B cell (primary cell): ENCODE measurements at regions of chr11 and their contacts with region 1.

Region 1: GRCh38 chr11:65859200-65859811 is 927 bp upstream of the MUS81 start:
- DNase-seq: peak; percentile 97
- ATAC-seq: peak; percentile 62
- H3K4me3 ChIP-seq: peak overlapping the region; percentile 81 to 98 (median 95)
- H3K4me3 Mint-ChIP-seq: peak overlapping the region; percentile 92
- H3K27ac ChIP-seq: peak overlapping the region; percentile 77 to 89
- H3K27ac Mint-ChIP-seq: peak overlapping the region; percentile 98
- H3K4me1 ChIP-seq: peaks cover 27 to 54% of the 10 kb centered on the region in 2 donors
- H3K4me1 Mint-ChIP-seq: peaks cover 47% of the 10 kb centered on the region
- H3K27me3 ChIP-seq: no peaks in the 10 kb centered on the region
- H3K27me3 Mint-ChIP-seq: no peaks in the 10 kb centered on the region
- CTCF ChIP-seq: no peak

Region 2: DNA sequence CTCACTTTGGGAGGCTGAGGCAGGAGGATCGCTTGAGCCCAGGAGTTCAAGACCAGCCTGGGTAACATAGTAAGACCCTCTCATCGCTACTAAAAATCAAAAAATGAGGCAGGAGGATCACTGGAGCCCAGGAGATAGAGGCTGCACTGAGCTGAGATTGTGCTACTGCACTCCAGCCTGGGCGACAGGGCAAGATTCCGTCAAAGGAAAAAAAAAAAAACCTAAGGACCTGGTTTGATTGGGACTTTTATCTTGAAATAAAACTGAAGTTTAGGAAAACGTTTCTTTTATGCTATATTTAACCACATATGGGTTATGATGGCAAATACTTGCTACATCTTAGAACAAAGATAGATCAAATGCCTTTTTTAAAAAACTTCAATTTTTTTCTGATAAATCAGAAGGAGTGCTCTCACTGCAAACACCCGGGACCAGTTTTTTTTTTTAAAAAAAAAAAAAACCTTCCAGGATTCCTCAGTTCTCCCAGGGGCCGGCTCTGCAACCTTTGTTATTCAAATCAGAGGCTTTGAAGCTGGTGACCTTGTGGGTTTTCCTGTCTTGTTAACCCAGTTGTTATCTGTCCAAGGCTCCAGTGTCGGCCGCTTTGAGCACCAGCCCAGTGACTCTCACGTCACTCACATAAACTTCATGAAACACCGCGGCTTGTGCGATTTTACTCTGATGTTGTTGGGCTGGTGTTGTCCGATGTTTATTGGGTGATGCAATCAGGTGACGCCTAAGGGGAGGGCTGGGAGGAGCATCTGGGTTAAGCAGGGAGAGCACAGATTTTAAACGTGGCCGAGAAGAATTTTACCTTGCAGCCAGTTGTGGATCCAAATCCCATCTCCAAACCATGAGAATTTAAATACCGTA is 1293.0 kb before region 1 on chr11:
- CTCF ChIA-PET with region 1: no interaction called
- POLR2A ChIA-PET with region 1: no interaction called
- intact Hi-C with region 1: no loop called
- DNase-seq: no peak
- ATAC-seq: no peak
- H3K4me3 ChIP-seq: no peak overlapping the region
- H3K4me3 Mint-ChIP-seq: no peak overlapping the region
- H3K27ac ChIP-seq: no peak overlapping the region
- H3K27ac Mint-ChIP-seq: no peak overlapping the region
- H3K4me1 ChIP-seq: no peaks in the 10 kb centered on the region
- H3K4me1 Mint-ChIP-seq: no peaks in the 10 kb centered on the region
- H3K27me3 ChIP-seq: no peaks in the 10 kb centered on the region
- H3K27me3 Mint-ChIP-seq: no peaks in the 10 kb centered on the region
- CTCF ChIP-seq: no peak

Region 3: DNA sequence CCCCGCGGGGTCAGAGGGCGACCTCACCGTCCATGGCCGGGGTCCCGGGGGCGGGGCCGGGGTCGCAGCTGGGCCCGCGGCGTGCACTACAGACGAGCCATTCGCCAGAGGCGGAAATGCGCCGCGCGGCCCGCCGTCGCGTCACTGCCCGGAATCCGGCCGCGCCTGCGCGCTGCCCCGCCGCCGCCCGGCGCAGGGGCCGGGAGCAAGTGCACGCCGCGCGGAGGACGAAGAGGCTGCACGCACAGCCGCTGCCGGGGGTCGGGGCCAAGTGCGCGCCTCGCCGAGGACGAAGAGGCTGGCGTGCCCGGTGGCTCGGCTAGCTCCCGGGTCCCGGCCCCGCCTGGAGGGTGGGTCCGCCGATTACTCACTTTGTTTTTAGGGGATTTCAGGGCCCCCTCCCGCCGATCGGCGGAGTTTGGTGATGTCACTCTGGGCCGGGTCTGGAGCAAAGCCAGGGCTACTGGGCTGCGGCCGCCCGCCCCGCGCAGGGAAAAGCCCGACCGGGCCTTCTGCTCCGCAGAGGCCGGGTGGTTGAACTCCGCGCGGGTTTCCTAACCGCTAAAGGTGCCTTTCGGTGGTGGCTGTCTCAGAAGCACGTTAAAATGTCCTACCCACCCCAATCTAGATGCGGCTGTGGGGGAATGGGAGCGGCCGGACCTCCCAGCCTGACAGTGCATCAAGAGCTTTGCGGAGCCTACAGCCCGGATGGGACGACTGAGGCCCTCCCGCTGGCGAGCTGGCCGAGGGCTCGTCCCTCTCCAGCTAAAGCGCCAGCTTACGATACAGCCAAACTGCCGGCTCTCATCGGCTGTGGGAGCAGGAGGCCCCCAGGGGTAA is 196.3 kb before region 1 on chr11 and contains the start of gene RELA:
- CTCF ChIA-PET with region 1: interaction called, 3 read pairs
- POLR2A ChIA-PET with region 1: no interaction called
- intact Hi-C with region 1: loop called (anchors 2 kb)
- DNase-seq: peak; percentile 94
- ATAC-seq: peak; percentile 86
- H3K4me3 ChIP-seq: peak within 1 kb of the TSS; percentile 85 to 99 (median 95)
- H3K4me3 Mint-ChIP-seq: peak within 1 kb of the TSS; percentile 89
- H3K27ac ChIP-seq: peak within 1 kb of the TSS; percentile 97 to 100
- H3K27ac Mint-ChIP-seq: peak within 1 kb of the TSS; percentile 94
- H3K4me1 ChIP-seq: peaks cover 19 to 32% of the 10 kb centered on the region in 2 donors
- H3K4me1 Mint-ChIP-seq: peaks cover 31% of the 10 kb centered on the region
- H3K27me3 ChIP-seq: no peaks in the 10 kb centered on the region
- H3K27me3 Mint-ChIP-seq: no peaks in the 10 kb centered on the region
- CTCF ChIP-seq: no peak
- total RNA-seq, gene RELA: 154 and 160 TPM in 2 replicates

Region 4: DNA sequence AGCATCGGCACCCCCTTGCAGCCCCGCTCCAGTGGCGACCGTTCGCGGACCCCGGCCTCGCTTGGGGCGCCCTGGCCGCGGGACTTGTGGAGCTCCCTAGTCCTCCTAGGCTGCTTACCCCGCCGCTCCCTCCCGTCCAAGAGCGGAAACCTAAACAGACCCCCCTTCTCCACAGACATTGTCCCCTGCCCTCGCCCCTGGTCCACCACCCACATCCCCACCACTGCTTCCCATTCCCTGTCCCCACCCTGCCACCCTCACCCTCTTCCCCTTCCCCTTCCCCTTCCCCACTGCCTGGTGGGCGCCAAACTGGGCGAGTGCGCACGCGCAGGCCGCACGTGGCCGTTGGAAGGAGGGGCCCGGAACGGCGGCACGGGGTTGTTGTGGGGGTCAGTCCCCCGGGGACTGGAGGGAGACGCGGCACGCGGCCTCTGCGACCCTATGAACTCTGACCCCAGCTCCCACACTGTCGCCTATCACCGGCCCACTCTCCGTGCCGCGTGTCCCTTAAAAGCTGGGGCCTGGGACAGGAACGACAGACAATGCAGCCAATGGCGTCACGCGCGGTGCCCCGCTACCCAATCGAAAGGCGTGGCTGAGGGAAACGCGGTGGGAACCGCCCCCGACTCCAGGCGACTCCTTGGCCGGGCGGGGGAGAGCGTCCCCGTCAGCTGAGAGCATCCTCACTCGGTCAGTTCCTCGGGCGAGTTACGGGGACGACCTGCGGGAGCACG is 25.8 kb before region 1 on chr11 and contains the start of gene SNX32:
- CTCF ChIA-PET with region 1: interaction called, 8 read pairs
- POLR2A ChIA-PET with region 1: interaction called, 10 read pairs
- intact Hi-C with region 1: loop called (anchors 1 kb)
- DNase-seq: peak; percentile 96
- ATAC-seq: peak; percentile 99
- H3K4me3 ChIP-seq: peak within 1 kb of the TSS; percentile 47 to 81 (median 67)
- H3K4me3 Mint-ChIP-seq: no peak within 1 kb of the TSS
- H3K27ac ChIP-seq: peak within 1 kb of the TSS; percentile 71 to 86
- H3K27ac Mint-ChIP-seq: peak within 1 kb of the TSS; percentile 50
- H3K4me1 ChIP-seq: peaks cover 13 to 21% of the 10 kb centered on the region in 2 donors
- H3K4me1 Mint-ChIP-seq: peaks cover 8% of the 10 kb centered on the region
- H3K27me3 ChIP-seq: peaks cover 0 to 4% (median 0%) of the 10 kb centered on the region in 4 experiments
- H3K27me3 Mint-ChIP-seq: no peaks in the 10 kb centered on the region
- CTCF ChIP-seq: no peak
- total RNA-seq, gene SNX32: 0.34 and 0.57 TPM in 2 replicates

Region 5: DNA sequence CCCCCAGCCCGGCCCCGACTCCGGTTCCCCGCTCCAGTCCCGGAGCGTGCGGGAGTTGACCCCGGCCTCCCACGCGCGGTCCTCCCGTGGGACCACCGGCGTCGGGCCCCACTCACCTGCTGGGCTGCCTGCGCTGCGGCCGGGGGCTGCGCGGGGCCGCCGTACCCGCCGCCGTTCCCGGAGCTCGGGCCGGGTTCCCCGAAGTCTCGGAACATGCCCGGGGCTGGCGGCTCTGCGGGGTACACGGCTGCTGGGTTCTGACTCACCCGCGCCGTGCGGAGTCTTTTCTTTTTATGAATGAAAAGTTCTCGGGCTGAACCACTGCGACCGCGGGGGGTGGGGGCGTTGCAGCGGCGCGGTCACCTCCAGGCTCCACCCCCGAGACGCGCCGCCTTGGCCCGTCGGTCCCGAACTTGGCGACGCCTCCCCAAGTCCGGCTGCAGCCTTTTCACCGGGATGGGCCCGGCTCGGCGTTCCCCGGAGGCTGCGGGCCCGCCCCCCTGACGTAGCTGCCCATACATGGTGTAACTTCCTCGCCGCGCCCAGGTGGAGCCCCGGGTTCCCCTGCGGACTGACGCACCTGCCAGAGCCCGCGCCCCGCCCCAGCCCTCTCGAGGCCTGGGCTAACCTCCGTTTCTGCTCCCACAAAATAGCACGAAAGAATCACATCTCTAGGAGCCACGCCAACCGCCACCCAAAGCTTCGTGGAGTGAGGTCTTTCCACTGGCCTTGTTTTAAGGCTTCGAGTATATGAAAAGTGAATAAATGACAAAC is 41.0 kb after region 1 on chr11 and contains the start of gene FOSL1:
- CTCF ChIA-PET with region 1: interaction called, 244 read pairs
- POLR2A ChIA-PET with region 1: no interaction called
- intact Hi-C with region 1: loop called (anchors 1 kb)
- DNase-seq: peak; percentile 96
- ATAC-seq: peak; percentile 95
- H3K4me3 ChIP-seq: peak within 1 kb of the TSS; percentile 2 to 64 (median 52)
- H3K4me3 Mint-ChIP-seq: peak within 1 kb of the TSS; percentile 83
- H3K27ac ChIP-seq: no peak within 1 kb of the TSS
- H3K27ac Mint-ChIP-seq: peak within 1 kb of the TSS; percentile 72
- H3K4me1 ChIP-seq: peaks cover 20% of the 10 kb centered on the region in 2 donors
- H3K4me1 Mint-ChIP-seq: peaks cover 10% of the 10 kb centered on the region
- H3K27me3 ChIP-seq: peaks cover 0 to 38% (median 12%) of the 10 kb centered on the region in 4 experiments
- H3K27me3 Mint-ChIP-seq: peaks cover 15% of the 10 kb centered on the region
- CTCF ChIP-seq: no peak
- total RNA-seq, gene FOSL1: not detected in 2 replicates

Region 6: GRCh38 chr11:65911682-65912568 is 52.6 kb after region 1 on chr11:
- CTCF ChIA-PET with region 1: no interaction called
- POLR2A ChIA-PET with region 1: no interaction called
- intact Hi-C with region 1: no loop called
- DNase-seq: no peak
- ATAC-seq: no peak
- H3K4me3 ChIP-seq: no peak overlapping the region
- H3K4me3 Mint-ChIP-seq: no peak overlapping the region
- H3K27ac ChIP-seq: no peak overlapping the region
- H3K27ac Mint-ChIP-seq: no peak overlapping the region
- H3K4me1 ChIP-seq: peaks cover 0 to 26% of the 10 kb centered on the region in 2 donors
- H3K4me1 Mint-ChIP-seq: peaks cover 26% of the 10 kb centered on the region
- H3K27me3 ChIP-seq: peaks cover 0 to 29% (median 7%) of the 10 kb centered on the region in 4 experiments
- H3K27me3 Mint-ChIP-seq: peaks cover 29% of the 10 kb centered on the region
- CTCF ChIP-seq: no peak

Region 7: DNA sequence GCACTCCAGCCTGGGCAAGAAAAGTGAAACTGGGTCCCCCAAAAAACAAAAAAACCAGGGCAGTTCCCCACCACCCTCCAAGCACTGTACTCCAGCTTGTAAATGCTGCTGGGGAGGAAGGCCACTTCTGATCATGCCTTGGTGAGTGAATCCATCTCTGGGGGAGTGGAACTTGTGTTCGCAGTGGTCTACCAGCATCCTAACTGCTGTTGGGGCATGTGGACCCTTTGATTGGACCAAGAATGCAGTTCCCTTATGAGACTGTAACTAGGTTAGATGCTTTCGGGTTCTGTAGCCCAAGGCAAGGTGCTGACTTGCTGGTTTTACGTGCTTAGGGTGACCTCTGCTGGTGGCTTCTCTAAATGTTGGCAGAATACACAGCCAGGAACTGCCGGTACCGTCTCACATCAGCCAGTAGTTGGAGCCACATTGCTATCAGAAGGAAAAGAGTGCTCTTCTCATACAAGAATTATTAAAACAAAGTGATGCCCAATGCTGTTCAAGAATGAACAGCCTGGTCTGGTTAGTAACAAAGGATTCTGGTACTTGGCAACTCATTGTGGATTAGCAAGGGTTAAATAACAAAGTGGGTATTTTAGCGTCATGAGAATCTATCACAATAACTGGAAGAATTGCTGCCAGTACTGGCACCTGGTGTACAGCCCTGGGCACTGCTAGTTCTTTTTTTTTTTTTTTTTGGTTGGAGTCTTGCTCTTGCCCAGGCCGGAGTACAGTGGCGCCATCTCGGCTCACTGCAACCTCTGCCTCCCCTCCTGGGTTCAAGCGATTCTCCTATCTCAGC is 129.7 kb after region 1 on chr11:
- CTCF ChIA-PET with region 1: interaction called, 6 read pairs
- POLR2A ChIA-PET with region 1: no interaction called
- intact Hi-C with region 1: loop called (anchors 1 kb)
- DNase-seq: peak; percentile 96
- ATAC-seq: peak; percentile 99
- H3K4me3 ChIP-seq: no peak overlapping the region
- H3K4me3 Mint-ChIP-seq: no peak overlapping the region
- H3K27ac ChIP-seq: no peak overlapping the region
- H3K27ac Mint-ChIP-seq: peak overlapping the region; percentile 84
- H3K4me1 ChIP-seq: peaks cover 3 to 7% of the 10 kb centered on the region in 2 donors
- H3K4me1 Mint-ChIP-seq: peaks cover 5% of the 10 kb centered on the region
- H3K27me3 ChIP-seq: no peaks in the 10 kb centered on the region
- H3K27me3 Mint-ChIP-seq: no peaks in the 10 kb centered on the region
- CTCF ChIP-seq: peak; percentile 99

Region 8: DNA sequence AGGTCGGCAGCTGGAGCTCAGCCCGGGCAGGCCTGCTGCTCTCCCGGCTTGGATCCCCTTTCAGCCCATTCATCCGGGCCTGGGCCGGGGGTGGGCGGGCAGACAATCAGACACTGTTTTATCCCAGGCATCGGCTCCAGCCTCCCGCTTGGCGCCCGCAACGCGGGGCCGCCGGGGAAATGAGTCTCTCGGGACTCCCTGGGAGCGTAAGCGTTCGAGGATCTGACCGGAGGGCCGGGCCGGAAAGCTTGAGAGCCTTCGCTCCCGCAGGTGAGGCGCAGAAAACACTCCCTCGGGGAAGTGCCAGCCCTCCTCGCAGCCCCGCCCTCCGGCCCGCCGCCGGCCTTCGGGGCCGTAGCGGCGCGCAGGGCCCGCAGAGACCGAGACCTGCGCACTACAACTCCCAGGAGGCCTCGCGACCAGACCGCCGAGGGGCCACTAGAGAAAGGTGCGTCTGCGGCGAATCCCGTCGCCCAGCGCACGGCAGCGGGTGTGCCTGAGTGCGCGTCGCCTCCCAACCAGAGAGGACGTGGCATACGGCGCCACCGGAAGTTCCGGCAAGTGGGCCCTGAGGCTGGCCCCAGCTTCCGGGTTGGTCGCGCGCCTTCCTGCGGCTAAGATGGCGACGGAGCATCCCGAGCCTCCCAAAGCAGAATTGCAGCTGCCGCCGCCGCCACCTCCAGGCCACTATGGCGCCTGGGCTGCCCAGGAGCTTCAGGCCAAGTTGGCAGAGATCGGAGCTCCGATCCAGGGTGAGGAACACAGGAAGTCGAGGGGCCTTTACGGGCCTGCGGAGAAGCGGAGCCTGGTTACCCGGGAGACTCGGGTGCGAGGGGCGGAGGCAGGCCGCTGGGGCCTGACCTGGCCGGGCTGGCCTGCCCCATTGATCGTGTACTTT is 192.7 kb after region 1 on chr11 and contains the start of gene SF3B2:
- CTCF ChIA-PET with region 1: interaction called, 3 read pairs
- POLR2A ChIA-PET with region 1: no interaction called
- intact Hi-C with region 1: loop called (anchors 1 kb)
- DNase-seq: peak; percentile 98
- ATAC-seq: peak; percentile 98
- H3K4me3 ChIP-seq: peak within 1 kb of the TSS; percentile 78 to 99 (median 88)
- H3K4me3 Mint-ChIP-seq: peak within 1 kb of the TSS; percentile 99
- H3K27ac ChIP-seq: peak within 1 kb of the TSS; percentile 61 to 85
- H3K27ac Mint-ChIP-seq: peak within 1 kb of the TSS; percentile 96
- H3K4me1 ChIP-seq: peaks cover 25 to 29% of the 10 kb centered on the region in 2 donors
- H3K4me1 Mint-ChIP-seq: peaks cover 29% of the 10 kb centered on the region
- H3K27me3 ChIP-seq: peaks cover 0 to 27% (median 5%) of the 10 kb centered on the region in 4 experiments
- H3K27me3 Mint-ChIP-seq: peaks cover 12% of the 10 kb centered on the region
- CTCF ChIP-seq: no peak
- total RNA-seq, gene SF3B2: 205 and 214 TPM in 2 replicates